Activated CD4-positive, alpha-beta T cell treated with anti-CD3 and anti-CD28 coated beads, Interleukin-2, amount 10 ng/mL, durations not matched to agents 24 days and 14 days (primary cell): ENCODE measurements at regions of chr20 and their contacts with region 1.

Region 1: DNA sequence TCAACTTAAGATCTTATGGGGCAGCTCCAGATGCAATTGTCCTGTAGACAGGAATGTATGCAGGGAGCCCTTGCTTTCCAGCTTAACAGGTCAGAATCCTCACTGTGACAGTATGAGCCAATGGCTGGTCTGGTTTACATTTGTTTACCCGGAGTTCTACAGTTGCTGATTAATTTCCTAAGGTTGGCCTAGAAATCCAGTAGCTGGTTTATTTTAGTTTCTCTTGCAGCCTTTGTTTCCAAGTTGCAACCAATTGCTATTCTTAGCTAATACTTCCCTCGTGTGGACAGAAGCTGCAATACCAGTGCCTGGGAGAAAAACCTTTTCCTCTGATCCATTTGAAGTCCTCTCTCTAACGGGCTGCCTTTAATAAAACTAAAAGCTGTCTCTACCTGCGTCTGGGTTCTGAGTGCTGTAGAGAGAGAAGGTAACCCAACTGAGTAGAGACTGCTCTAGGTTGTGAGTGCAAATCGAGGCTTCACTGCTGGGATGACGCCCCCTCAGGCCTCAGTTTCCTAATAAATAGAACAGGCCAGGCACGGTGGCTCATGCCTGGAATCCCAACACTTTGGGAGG is 45.9 kb downstream of the ZNF217 start:
- DNase-seq: peak; percentile 84
- H3K4me3 Mint-ChIP-seq: no peak overlapping the region
- H3K27ac Mint-ChIP-seq: no peak overlapping the region
- H3K4me1 Mint-ChIP-seq: no peaks in the 10 kb centered on the region
- H3K27me3 Mint-ChIP-seq: no peaks in the 10 kb centered on the region

Region 2: DNA sequence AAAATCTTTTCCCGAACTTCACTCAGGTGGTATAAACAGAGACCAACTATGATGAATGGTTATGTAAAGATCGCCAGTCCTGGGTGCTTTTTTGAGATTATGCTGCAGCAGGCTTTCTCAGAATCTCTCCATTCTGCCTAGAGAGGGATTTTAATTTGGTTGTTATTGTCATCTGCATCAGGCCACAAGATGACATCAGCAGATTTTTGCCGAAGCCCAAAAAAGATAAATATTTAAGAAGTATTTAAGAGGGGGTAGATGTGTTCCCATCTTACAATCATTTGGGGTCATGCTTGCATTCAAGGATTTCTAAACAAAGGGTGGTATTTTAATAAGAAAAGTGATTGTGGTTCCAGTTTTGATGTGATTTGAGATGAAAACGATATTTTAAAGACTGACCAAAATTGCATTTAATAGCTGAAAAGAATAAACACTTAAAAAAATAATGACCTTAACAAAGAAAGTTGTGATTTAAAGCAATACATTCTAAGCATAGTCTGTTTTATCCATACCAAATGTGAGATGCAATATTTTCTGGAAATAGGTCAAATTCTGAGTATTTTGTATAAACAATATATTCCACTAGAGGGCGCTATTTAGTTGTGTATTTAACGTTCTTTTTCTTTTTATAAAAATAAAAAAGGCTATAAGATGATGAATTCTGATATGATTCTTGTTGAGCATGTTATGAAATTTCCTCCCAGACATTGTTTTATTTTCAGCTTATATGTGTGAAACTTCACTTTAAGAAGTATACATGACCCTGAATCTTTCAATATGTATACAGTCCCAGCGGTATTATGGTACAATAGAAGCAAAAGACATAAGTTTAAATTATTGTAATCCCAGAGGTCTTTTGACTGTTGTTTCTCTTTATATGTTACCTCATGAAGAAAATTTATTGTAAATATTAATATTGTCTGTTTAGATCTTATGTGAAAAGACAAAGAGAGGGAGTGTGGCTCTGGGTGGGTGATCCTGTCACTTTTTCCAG is 1305.2 kb before region 1 on chr20:
- intact Hi-C with region 1: loop called (anchors 5 kb)
- DNase-seq: no peak
- H3K4me3 Mint-ChIP-seq: no peak overlapping the region
- H3K27ac Mint-ChIP-seq: no peak overlapping the region
- H3K4me1 Mint-ChIP-seq: no peaks in the 10 kb centered on the region
- H3K27me3 Mint-ChIP-seq: peaks cover 2% of the 10 kb centered on the region

Region 3: DNA sequence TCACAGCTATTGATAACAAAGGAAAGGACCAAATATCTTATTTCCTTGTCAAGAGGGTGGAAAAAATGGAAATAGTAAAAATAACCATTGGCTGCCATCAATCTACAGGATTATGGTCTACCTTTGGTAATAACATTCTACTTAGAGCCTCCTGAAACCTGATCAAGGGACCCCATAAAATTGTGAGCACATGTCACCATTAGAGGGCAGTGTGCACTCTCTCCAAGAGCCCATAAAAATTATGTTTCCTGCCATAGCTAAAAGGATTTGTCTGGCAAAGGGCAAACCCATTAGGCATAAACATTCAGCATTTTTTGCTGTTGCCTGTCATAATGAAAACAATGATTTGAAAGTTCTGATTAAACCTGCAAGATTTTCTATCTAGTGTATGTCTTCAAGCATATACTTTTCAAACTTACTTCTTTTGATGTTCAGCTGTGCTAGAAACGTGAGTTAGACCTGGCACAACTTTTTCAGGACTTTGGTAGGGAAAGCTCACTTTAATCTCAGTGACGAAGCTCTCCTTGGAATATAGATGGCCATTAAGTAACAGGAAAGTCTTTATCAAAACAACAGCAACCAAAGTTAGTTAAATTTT is 1235.5 kb before region 1 on chr20:
- intact Hi-C with region 1: loop called (anchors 5 kb)
- DNase-seq: peak; percentile 86
- H3K4me3 Mint-ChIP-seq: no peak overlapping the region
- H3K27ac Mint-ChIP-seq: no peak overlapping the region
- H3K4me1 Mint-ChIP-seq: peaks cover 6% of the 10 kb centered on the region
- H3K27me3 Mint-ChIP-seq: peaks cover 2% of the 10 kb centered on the region

Region 4: DNA sequence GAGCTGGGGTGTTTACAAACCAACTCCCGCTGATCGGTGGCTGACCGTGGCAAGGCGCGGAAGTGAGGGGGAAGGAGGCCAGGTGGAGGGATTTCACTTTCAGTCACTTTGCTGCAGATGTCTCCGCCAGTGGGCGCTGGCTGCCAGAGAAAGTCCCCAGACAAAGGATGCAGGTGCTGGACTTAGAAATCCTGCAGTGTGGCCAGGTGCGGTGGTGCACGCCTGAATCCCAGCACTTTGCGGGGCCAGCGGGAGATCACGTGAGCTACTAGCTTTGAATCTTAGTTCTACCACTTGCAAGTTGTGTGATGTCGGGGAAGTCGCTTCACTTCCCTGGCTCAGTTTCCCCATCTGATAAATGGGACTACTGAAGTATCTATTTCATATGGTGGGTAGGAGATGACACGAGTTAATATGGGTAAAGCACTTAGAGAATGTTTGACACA is 134.5 kb before region 1 on chr20:
- intact Hi-C with region 1: loop called (anchors 10 kb)
- DNase-seq: peak; percentile 83
- H3K4me3 Mint-ChIP-seq: no peak overlapping the region
- H3K27ac Mint-ChIP-seq: no peak overlapping the region
- H3K4me1 Mint-ChIP-seq: peaks cover 5% of the 10 kb centered on the region
- H3K27me3 Mint-ChIP-seq: no peaks in the 10 kb centered on the region

Region 5: GRCh38 chr20:53502820-53503219 is 44.9 kb before region 1 on chr20:
- intact Hi-C with region 1: no loop called
- DNase-seq: no peak
- H3K4me3 Mint-ChIP-seq: no peak overlapping the region
- H3K27ac Mint-ChIP-seq: no peak overlapping the region
- H3K4me1 Mint-ChIP-seq: no peaks in the 10 kb centered on the region
- H3K27me3 Mint-ChIP-seq: no peaks in the 10 kb centered on the region